Sigmoid colon (tissue), 7 donors: ENCODE measurements at regions of chr17 and their contacts with region 1.

Region 1: GRCh38 chr17:65137021-65137991 is at the start of gene RGS9:
- DNase-seq: peak; percentile 93
- H3K4me3 ChIP-seq: peak within 1 kb of the TSS; percentile 47 to 66 (median 53)
- H3K27ac ChIP-seq: peak within 1 kb of the TSS; percentile 19 to 72 (median 58)
- H3K4me1 ChIP-seq: peaks cover 0 to 28% (median 8%) of the 10 kb centered on the region in 4 donors
- H3K27me3 ChIP-seq: no peaks in the 10 kb centered on the region
- CTCF ChIP-seq: peak; percentile 95 to 99 (median 97)
- EP300 ChIP-seq: no peak
- POLR2A ChIP-seq: no peak
- total RNA-seq, gene RGS9: 12.4 to 30.5 (median 19.3) TPM

Region 2: GRCh38 chr17:64661976-64662773 is 475.1 kb before region 1 on chr17 and contains the start of gene SMURF2:
- intact Hi-C with region 1: loop called (anchors 10 kb)
- DNase-seq: peak; percentile 88
- H3K4me3 ChIP-seq: peak within 1 kb of the TSS; percentile 81 to 92 (median 86)
- H3K27ac ChIP-seq: peak within 1 kb of the TSS; percentile 85 to 95 (median 90)
- H3K4me1 ChIP-seq: peaks cover 0 to 42% (median 30%) of the 10 kb centered on the region in 4 donors
- H3K27me3 ChIP-seq: no peaks in the 10 kb centered on the region
- CTCF ChIP-seq: peak in 1 of 4 experiments; percentile 14
- EP300 ChIP-seq: no peak
- POLR2A ChIP-seq: peak in 1 of 2 donors; percentile 28
- total RNA-seq, gene SMURF2: 23.8 to 30.2 (median 25.9) TPM

Region 3: DNA sequence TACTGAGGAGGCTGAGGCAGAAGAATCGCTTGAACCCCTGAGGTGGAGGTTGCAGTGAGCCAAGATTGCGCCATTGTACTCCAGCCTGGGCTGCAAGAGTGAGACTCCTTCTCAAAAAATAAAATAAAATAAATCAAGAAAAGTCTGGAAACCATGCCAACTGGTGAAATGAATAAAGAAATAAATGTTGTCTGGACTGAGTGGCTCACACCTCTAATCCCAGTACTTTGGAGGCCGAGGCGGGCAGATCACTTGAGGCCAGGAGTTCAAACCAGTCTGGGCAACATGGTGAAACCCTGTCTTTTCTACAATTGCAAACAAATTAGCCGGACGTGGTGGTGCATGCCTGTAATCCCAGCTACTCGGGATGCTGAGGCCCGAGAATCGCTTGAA is 217.3 kb before region 1 on chr17:
- intact Hi-C with region 1: loop called (anchors 5 kb)
- DNase-seq: no peak
- H3K4me3 ChIP-seq: peak overlapping the region; percentile 69 to 99 (median 82)
- H3K27ac ChIP-seq: peak overlapping the region; percentile 91 to 99 (median 94)
- H3K4me1 ChIP-seq: peaks cover 0 to 12% (median 3%) of the 10 kb centered on the region in 4 donors
- H3K27me3 ChIP-seq: no peaks in the 10 kb centered on the region
- CTCF ChIP-seq: no peak
- EP300 ChIP-seq: no peak
- POLR2A ChIP-seq: no peak

Region 4: GRCh38 chr17:64964796-64965195 is 172.5 kb before region 1 on chr17:
- intact Hi-C with region 1: loop called (anchors 5 kb)
- DNase-seq: no peak
- H3K4me3 ChIP-seq: no peak overlapping the region
- H3K27ac ChIP-seq: peak overlapping the region; percentile 73 to 81 (median 79)
- H3K4me1 ChIP-seq: peaks cover 0 to 38% (median 24%) of the 10 kb centered on the region in 4 donors
- H3K27me3 ChIP-seq: no peaks in the 10 kb centered on the region
- CTCF ChIP-seq: no peak
- EP300 ChIP-seq: no peak
- POLR2A ChIP-seq: no peak

Region 5: DNA sequence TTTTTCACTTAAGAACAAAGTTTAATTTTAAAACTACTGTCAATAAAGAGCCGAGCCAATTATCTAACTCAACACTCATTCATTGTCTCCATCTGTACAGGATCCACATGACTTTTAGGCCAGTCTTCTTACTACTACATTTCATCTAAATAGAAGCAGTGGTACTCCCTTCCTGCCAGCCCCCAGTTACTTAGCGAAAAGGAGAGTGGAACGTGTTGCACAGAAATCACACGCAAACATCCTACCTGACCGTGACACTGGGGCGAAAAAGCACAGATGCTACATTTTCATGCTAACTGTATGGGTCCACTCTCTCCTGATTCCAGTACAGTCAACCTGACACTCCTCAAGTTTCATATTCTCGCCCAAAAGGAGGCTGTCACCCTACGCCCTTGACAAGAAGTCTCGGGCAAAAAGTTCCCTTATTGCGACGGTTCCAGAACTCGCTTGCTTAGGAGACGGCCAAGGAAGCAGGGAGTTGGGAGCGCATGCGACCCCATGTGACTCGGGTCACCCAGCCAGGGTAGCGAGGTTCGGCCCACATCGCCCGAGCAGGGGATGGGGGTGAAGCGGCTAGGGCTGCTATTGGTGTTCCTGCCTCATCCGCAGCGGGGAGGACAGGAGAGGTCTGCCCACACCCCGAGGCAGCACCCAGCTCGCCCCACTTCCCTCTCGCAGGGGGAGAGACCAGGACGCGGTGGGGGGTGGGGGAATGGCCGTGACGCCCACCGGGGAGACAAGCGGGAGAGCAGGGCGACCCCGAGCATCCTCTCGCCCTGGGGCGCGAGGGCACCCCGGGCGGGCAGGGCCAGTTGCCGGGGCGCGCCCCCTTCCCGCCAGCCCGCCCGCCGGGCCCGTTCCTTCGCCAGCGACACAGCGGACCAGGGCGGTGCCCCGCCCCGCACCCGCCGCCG is 81.7 kb before region 1 on chr17:
- intact Hi-C with region 1: loop called (anchors 2 kb)
- DNase-seq: peak; percentile 88
- H3K4me3 ChIP-seq: peak overlapping the region; percentile 91 to 97 (median 96)
- H3K27ac ChIP-seq: peak overlapping the region; percentile 98 to 99 (median 99)
- H3K4me1 ChIP-seq: peaks cover 0 to 43% (median 33%) of the 10 kb centered on the region in 4 donors
- H3K27me3 ChIP-seq: no peaks in the 10 kb centered on the region
- CTCF ChIP-seq: no peak
- EP300 ChIP-seq: peak in 1 of 4 donors; percentile 39
- POLR2A ChIP-seq: peak in 1 of 2 donors; percentile 33